B cell (primary cell): ENCODE measurements at regions of chr3 and their contacts with region 1.

Region 1: DNA sequence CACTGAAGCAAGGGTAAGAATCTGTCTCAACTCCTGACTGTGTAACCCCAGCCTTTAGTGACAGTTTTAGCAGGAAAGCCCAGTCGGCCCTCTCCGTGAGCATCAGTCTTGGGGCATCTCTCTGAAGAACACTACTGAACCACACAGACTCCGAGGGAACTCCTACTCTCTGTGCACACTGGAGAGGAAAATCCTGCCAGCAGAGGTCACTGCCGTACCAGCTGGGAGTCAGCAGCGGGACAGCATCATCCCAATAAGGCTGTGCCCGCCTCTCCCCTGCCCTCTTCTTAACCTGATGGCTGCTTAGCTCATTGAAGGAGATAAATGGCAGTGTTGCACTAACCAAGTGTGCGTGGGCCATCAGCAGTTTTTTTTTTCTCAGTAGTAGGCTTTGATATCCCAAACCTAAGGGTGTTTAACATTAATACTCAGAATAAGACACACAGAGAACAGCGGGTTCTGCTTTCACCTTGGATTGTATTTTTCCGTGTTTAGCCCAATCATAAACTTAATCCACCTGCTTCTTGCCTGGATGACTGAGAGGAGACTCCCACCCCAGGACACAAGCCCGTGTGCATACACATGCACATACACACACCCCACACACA is 26.6 kb upstream of the RASA2 start:
- DNase-seq: peak; percentile 85
- ATAC-seq: peak; percentile 99
- H3K4me3 ChIP-seq: no peak overlapping the region
- H3K4me3 Mint-ChIP-seq: no peak overlapping the region
- H3K27ac ChIP-seq: no peak overlapping the region
- H3K27ac Mint-ChIP-seq: no peak overlapping the region
- H3K4me1 ChIP-seq: peaks cover 9 to 10% of the 10 kb centered on the region in 2 donors
- H3K4me1 Mint-ChIP-seq: peaks cover 13% of the 10 kb centered on the region
- H3K27me3 ChIP-seq: no peaks in the 10 kb centered on the region
- H3K27me3 Mint-ChIP-seq: no peaks in the 10 kb centered on the region
- CTCF ChIP-seq: peak; percentile 92

Region 2: DNA sequence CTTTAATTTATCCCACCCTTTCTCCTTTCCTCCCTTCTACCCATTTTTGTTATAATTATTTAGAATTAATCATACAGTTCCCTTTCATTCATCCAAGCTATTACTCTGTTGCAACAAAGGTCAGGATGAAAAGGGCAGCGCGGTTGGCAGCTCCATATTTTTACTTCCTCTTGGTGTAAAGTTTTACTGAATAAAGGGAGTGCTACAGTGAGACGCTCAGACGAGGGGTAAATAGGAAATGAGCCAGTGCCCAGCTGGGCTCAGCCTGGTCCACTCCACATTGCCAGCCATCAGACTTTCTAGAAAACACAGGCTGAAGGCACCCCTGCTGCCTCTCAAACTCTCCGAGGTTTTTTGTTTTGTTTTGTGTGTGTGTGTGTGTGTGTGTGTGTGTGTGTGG is 113.8 kb before region 1 on chr3:
- CTCF ChIA-PET with region 1: no interaction called
- POLR2A ChIA-PET with region 1: no interaction called
- intact Hi-C with region 1: no loop called
- DNase-seq: no peak
- ATAC-seq: no peak
- H3K4me3 ChIP-seq: no peak overlapping the region
- H3K4me3 Mint-ChIP-seq: peak overlapping the region; percentile 14
- H3K27ac ChIP-seq: no peak overlapping the region
- H3K27ac Mint-ChIP-seq: no peak overlapping the region
- H3K4me1 ChIP-seq: no peaks in the 10 kb centered on the region
- H3K4me1 Mint-ChIP-seq: no peaks in the 10 kb centered on the region
- H3K27me3 ChIP-seq: no peaks in the 10 kb centered on the region
- H3K27me3 Mint-ChIP-seq: peaks cover 6% of the 10 kb centered on the region
- CTCF ChIP-seq: no peak

Region 3: DNA sequence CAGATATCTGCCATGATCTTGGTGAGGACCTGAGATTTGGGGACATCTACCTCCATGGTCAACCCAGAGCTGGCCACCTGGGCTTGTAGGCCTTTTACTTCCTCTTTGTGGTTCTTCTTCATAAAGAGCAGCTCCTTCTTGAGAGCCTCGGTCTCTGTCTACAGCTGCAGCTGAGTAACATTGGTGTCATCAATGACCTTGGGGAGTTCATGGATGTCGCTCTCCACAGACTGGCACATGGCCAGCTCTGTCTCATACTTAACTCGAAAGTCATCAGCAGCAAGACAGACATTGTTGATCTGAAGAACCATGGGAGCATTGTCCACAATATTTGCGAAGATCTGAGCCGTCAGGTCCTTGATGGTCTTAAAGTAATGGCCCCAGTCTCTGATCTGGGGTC is 11.0 kb after region 1 on chr3:
- CTCF ChIA-PET with region 1: interaction called, 55 read pairs
- POLR2A ChIA-PET with region 1: interaction called, 3 read pairs
- intact Hi-C with region 1: loop called (anchors 2 kb)
- DNase-seq: no peak
- ATAC-seq: peak; percentile 14
- H3K4me3 ChIP-seq: no peak overlapping the region
- H3K4me3 Mint-ChIP-seq: no peak overlapping the region
- H3K27ac ChIP-seq: no peak overlapping the region
- H3K27ac Mint-ChIP-seq: no peak overlapping the region
- H3K4me1 ChIP-seq: peaks cover 0 to 4% of the 10 kb centered on the region in 2 donors
- H3K4me1 Mint-ChIP-seq: peaks cover 8% of the 10 kb centered on the region
- H3K27me3 ChIP-seq: no peaks in the 10 kb centered on the region
- H3K27me3 Mint-ChIP-seq: no peaks in the 10 kb centered on the region
- CTCF ChIP-seq: no peak

Region 4: GRCh38 chr3:141487521-141488252 is 27.5 kb after region 1 on chr3:
- CTCF ChIA-PET with region 1: interaction called, 4 read pairs
- POLR2A ChIA-PET with region 1: no interaction called
- intact Hi-C with region 1: loop called (anchors 1 kb)
- DNase-seq: peak; percentile 91
- ATAC-seq: peak; percentile 70
- H3K4me3 ChIP-seq: peak overlapping the region; percentile 48 to 96 (median 67)
- H3K4me3 Mint-ChIP-seq: peak overlapping the region; percentile 88
- H3K27ac ChIP-seq: peak overlapping the region; percentile 83 to 91
- H3K27ac Mint-ChIP-seq: peak overlapping the region; percentile 93
- H3K4me1 ChIP-seq: peaks cover 45 to 66% of the 10 kb centered on the region in 2 donors
- H3K4me1 Mint-ChIP-seq: peaks cover 70% of the 10 kb centered on the region
- H3K27me3 ChIP-seq: no peaks in the 10 kb centered on the region
- H3K27me3 Mint-ChIP-seq: no peaks in the 10 kb centered on the region
- CTCF ChIP-seq: no peak

Region 5: GRCh38 chr3:141570068-141570467 is 109.9 kb after region 1 on chr3:
- CTCF ChIA-PET with region 1: interaction called, 409 read pairs
- POLR2A ChIA-PET with region 1: no interaction called
- intact Hi-C with region 1: no loop called
- DNase-seq: no peak
- ATAC-seq: no peak
- H3K4me3 ChIP-seq: no peak overlapping the region
- H3K4me3 Mint-ChIP-seq: no peak overlapping the region
- H3K27ac ChIP-seq: no peak overlapping the region
- H3K27ac Mint-ChIP-seq: no peak overlapping the region
- H3K4me1 ChIP-seq: no peaks in the 10 kb centered on the region
- H3K4me1 Mint-ChIP-seq: no peaks in the 10 kb centered on the region
- H3K27me3 ChIP-seq: no peaks in the 10 kb centered on the region
- H3K27me3 Mint-ChIP-seq: no peaks in the 10 kb centered on the region
- CTCF ChIP-seq: no peak

Region 6: DNA sequence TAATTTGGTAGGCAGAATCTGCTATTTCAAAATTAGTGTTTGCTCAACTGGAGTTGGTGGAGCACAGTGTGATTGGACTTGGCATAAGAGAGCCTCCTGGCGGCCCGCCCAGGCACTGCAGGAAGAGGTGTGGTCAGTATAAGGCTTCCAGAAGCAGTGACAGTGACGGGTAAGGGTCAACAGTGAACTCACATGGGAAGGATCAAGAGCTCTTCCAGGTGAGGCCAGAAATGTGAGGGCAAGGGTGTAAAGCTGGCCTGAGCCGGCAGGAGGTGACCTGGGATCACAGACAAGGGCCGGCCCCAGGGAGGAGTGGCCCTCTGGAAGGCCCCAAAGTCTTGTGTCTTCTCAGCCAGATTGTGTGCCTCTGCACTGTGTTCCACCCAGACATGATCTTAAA is 184.7 kb after region 1 on chr3:
- CTCF ChIA-PET with region 1: interaction called, 25 read pairs
- POLR2A ChIA-PET with region 1: no interaction called
- intact Hi-C with region 1: loop called (anchors 1 kb)
- DNase-seq: peak; percentile 58
- ATAC-seq: peak; percentile 60
- H3K4me3 ChIP-seq: no peak overlapping the region
- H3K4me3 Mint-ChIP-seq: no peak overlapping the region
- H3K27ac ChIP-seq: no peak overlapping the region
- H3K27ac Mint-ChIP-seq: no peak overlapping the region
- H3K4me1 ChIP-seq: no peaks in the 10 kb centered on the region
- H3K4me1 Mint-ChIP-seq: no peaks in the 10 kb centered on the region
- H3K27me3 ChIP-seq: no peaks in the 10 kb centered on the region
- H3K27me3 Mint-ChIP-seq: no peaks in the 10 kb centered on the region
- CTCF ChIP-seq: peak; percentile 77

Region 7: DNA sequence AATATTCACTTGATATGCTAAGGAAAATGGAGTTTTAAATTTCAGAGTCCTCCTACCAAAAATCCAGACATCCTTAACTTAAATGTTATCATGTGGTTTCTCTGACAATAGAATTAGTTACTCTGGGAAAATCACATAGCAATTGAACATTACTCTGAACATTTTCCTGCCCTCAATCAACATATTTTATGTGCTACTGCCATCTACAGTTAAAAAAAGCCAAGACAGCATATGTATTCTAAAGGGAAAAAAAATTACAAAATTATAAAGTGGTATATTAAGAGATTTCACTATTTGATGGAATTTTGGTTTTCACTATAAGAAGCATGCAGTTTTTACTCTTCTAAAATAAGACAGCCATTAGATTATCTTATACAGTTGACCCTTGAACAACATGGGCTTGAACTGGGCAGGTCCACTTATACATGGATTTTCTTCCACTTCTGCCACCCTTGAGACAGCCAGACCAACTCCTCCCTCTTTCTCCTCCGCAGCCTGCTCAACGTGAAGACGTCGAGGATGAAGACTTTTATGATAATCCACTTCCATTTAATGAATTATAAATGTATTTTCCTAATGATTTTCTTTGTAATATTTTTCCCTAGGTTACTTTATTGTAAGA is 538.6 kb after region 1 on chr3:
- CTCF ChIA-PET with region 1: no interaction called
- POLR2A ChIA-PET with region 1: no interaction called
- intact Hi-C with region 1: loop called (anchors 10 kb)
- DNase-seq: peak; percentile 10
- ATAC-seq: no peak
- H3K4me3 ChIP-seq: no peak overlapping the region
- H3K4me3 Mint-ChIP-seq: no peak overlapping the region
- H3K27ac ChIP-seq: no peak overlapping the region
- H3K27ac Mint-ChIP-seq: no peak overlapping the region
- H3K4me1 ChIP-seq: no peaks in the 10 kb centered on the region
- H3K4me1 Mint-ChIP-seq: peaks cover 4% of the 10 kb centered on the region
- H3K27me3 ChIP-seq: no peaks in the 10 kb centered on the region
- H3K27me3 Mint-ChIP-seq: no peaks in the 10 kb centered on the region
- CTCF ChIP-seq: peak; percentile 35